Naive thymus-derived CD4-positive, alpha-beta T cell (primary cell): ENCODE measurements at regions of chr4 and their contacts with region 1.

Region 1: GRCh38 chr4:2761035-2761923 is 5.1 kb upstream of the TNIP2 start:
- DNase-seq: no peak
- ATAC-seq: no peak
- H3K4me3 ChIP-seq: no peak overlapping the region
- H3K4me3 Mint-ChIP-seq: no peak overlapping the region
- H3K27ac ChIP-seq: no peak overlapping the region
- H3K27ac Mint-ChIP-seq: peak overlapping the region in 4 of 9 donors; percentile 14 to 71 (median 54)
- H3K4me1 ChIP-seq: peaks cover 0 to 4% of the 10 kb centered on the region in 2 donors
- H3K4me1 Mint-ChIP-seq: peaks cover 0 to 15% (median 5%) of the 10 kb centered on the region in 7 donors
- H3K27me3 ChIP-seq: no peaks in the 10 kb centered on the region
- H3K27me3 Mint-ChIP-seq: no peaks in the 10 kb centered on the region

Region 2: GRCh38 chr4:2364654-2365053 is 396.6 kb before region 1 on chr4:
- CTCF ChIA-PET with region 1: no interaction called
- POLR2A ChIA-PET with region 1: no interaction called
- intact Hi-C with region 1: no loop called
- DNase-seq: peak; percentile 49 to 74 (median 61)
- ATAC-seq: peak; percentile 89
- H3K4me3 ChIP-seq: peak overlapping the region; percentile 79
- H3K4me3 Mint-ChIP-seq: peak overlapping the region; percentile 37 to 88 (median 78)
- H3K27ac ChIP-seq: peak overlapping the region; percentile 81
- H3K27ac Mint-ChIP-seq: peak overlapping the region in 8 of 9 donors; percentile 53 to 93 (median 81)
- H3K4me1 ChIP-seq: peaks cover 9 to 12% of the 10 kb centered on the region in 2 donors
- H3K4me1 Mint-ChIP-seq: peaks cover 0 to 31% (median 9%) of the 10 kb centered on the region in 7 donors
- H3K27me3 ChIP-seq: no peaks in the 10 kb centered on the region
- H3K27me3 Mint-ChIP-seq: no peaks in the 10 kb centered on the region

Region 3: DNA sequence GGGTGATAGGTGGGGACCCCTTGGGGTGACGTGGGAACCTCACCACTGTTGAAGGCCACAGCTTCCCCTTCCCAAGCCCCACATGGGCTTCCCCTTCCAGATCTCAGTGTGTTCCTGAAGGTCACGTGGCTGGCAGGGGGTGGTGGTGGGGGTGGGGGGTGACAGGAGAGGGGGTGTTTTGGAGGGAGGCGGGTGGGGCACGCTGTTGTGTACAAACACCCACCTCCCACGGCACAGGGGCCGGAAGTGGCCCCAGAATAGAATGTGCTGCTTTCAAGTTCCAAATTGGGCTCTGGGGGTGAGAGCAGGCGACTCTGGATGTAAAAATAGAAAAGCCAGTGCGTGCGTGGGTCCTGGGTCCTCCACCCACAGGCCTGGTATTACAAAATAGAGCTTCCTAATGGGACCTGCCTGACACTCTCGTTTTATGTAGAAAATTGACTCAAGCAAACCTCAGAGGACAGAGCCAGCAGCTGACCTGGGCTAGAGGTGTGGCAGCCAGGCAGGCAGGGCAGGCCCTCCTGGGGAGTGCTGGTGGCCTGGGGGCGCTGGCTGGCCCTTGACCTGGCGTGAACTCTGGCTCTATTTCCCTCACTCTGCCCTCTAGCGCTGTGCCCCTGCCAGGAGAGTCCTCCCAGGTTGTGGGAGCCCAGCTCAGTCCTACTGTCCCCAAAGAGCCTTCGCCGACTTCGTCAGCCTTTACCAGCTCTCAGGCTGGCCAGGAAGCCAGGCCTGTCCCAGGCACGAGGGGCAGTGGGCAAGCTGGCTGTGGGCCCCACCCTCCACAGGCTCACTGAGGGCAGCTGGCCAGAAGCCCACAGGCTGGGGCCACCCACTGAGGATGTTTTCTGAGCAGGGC is 26.2 kb after region 1 on chr4:
- CTCF ChIA-PET with region 1: interaction called, 4 read pairs
- POLR2A ChIA-PET with region 1: interaction called, 5 read pairs
- intact Hi-C with region 1: loop called (anchors 1 kb)
- DNase-seq: peak in 7 of 9 donors; percentile 30 to 68 (median 56)
- ATAC-seq: peak; percentile 65
- H3K4me3 ChIP-seq: no peak overlapping the region
- H3K4me3 Mint-ChIP-seq: peak overlapping the region; percentile 47 to 77 (median 56)
- H3K27ac ChIP-seq: peak overlapping the region; percentile 80
- H3K27ac Mint-ChIP-seq: peak overlapping the region; percentile 86 to 95 (median 90)
- H3K4me1 ChIP-seq: peaks cover 25 to 30% of the 10 kb centered on the region in 2 donors
- H3K4me1 Mint-ChIP-seq: peaks cover 21 to 54% (median 37%) of the 10 kb centered on the region in 7 donors
- H3K27me3 ChIP-seq: no peaks in the 10 kb centered on the region
- H3K27me3 Mint-ChIP-seq: peaks cover 0 to 13% (median 0%) of the 10 kb centered on the region in 5 donors

Region 4: GRCh38 chr4:2811830-2812611 is 50.7 kb after region 1 on chr4:
- CTCF ChIA-PET with region 1: no interaction called
- POLR2A ChIA-PET with region 1: no interaction called
- intact Hi-C with region 1: loop called (anchors 1 to 2 kb)
- DNase-seq: peak in 8 of 9 donors; percentile 40 to 69 (median 49)
- ATAC-seq: peak; percentile 79
- H3K4me3 ChIP-seq: peak overlapping the region; percentile 81
- H3K4me3 Mint-ChIP-seq: peak overlapping the region; percentile 81 to 99 (median 94)
- H3K27ac ChIP-seq: peak overlapping the region; percentile 85
- H3K27ac Mint-ChIP-seq: peak overlapping the region; percentile 93 to 99 (median 98)
- H3K4me1 ChIP-seq: peaks cover 39 to 46% of the 10 kb centered on the region in 2 donors
- H3K4me1 Mint-ChIP-seq: peaks cover 39 to 59% (median 53%) of the 10 kb centered on the region in 7 donors
- H3K27me3 ChIP-seq: no peaks in the 10 kb centered on the region
- H3K27me3 Mint-ChIP-seq: no peaks in the 10 kb centered on the region

Region 5: DNA sequence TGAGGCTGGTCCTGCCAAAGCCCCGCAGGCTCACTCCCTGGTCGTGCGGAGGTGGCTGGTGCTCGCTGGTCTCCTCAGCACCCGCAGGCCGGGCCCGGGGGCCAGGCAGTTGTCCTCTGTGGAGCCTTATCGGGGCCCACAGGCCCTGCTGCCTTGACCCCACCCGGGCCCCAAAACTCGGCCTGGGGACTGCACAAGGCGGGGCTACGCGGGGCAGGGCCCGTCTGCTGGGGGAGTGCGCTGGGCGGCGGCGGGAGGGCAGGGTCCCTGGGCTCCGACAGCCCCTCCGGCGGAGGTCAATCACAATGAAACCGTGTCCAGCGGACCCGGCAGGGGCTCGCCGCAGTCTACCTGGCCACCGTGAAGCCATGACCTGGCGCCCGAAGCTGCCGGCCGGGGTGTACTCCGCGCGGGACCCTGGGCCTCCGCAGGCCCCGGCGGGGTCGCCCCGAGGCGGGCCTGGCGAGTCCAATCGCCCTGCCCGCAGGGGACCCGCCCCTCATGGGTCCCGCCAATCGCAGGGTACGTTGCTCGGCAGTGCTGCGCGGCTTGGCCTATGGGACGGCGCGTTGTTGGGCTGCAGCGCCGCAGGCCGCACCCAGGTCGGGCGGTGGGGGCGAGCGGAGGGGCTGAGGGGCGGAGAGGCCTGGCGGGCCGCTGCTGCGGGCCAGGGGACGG is 82.1 kb after region 1 on chr4 and contains the start of gene ADD1:
- CTCF ChIA-PET with region 1: interaction called, 3 read pairs
- POLR2A ChIA-PET with region 1: interaction called, 3 read pairs
- intact Hi-C with region 1: loop called (anchors 1 kb)
- DNase-seq: peak; percentile 84 to 100 (median 94)
- ATAC-seq: peak; percentile 98
- H3K4me3 ChIP-seq: peak within 1 kb of the TSS; percentile 80
- H3K4me3 Mint-ChIP-seq: peak within 1 kb of the TSS; percentile 87 to 100 (median 92)
- H3K27ac ChIP-seq: peak within 1 kb of the TSS; percentile 95
- H3K27ac Mint-ChIP-seq: peak within 1 kb of the TSS; percentile 85 to 97 (median 93)
- H3K4me1 ChIP-seq: peaks cover 33 to 40% of the 10 kb centered on the region in 2 donors
- H3K4me1 Mint-ChIP-seq: peaks cover 39 to 75% (median 59%) of the 10 kb centered on the region in 7 donors
- H3K27me3 ChIP-seq: no peaks in the 10 kb centered on the region
- H3K27me3 Mint-ChIP-seq: no peaks in the 10 kb centered on the region
- total RNA-seq, gene ADD1: 211 to 300 (median 282) TPM

Region 6: GRCh38 chr4:2954358-2955185 is 193.3 kb after region 1 on chr4:
- CTCF ChIA-PET with region 1: interaction called, 3 read pairs
- POLR2A ChIA-PET with region 1: interaction called, 3 read pairs
- intact Hi-C with region 1: loop called in 1 of 2 experiments (anchors 2 kb)
- DNase-seq: peak in 2 of 9 donors; percentile 47 to 82
- ATAC-seq: peak; percentile 76
- H3K4me3 ChIP-seq: no peak overlapping the region
- H3K4me3 Mint-ChIP-seq: peak overlapping the region in 5 of 10 donors; percentile 19 to 73 (median 31)
- H3K27ac ChIP-seq: peak overlapping the region; percentile 6
- H3K27ac Mint-ChIP-seq: peak overlapping the region; percentile 64 to 95 (median 88)
- H3K4me1 ChIP-seq: peaks cover 4% of the 10 kb centered on the region in 2 donors
- H3K4me1 Mint-ChIP-seq: peaks cover 7 to 54% (median 35%) of the 10 kb centered on the region in 7 donors
- H3K27me3 ChIP-seq: no peaks in the 10 kb centered on the region
- H3K27me3 Mint-ChIP-seq: no peaks in the 10 kb centered on the region